CD4-positive, alpha-beta memory T cell (primary cell): ENCODE measurements at regions of chr14 and their contacts with region 1.

Region 1: GRCh38 chr14:105045710-105046326 is 19.4 kb downstream of the GPR132 start:
- DNase-seq: peak; percentile 86 to 91 (median 88)
- H3K4me3 ChIP-seq: no peak overlapping the region
- H3K4me3 Mint-ChIP-seq: peak overlapping the region in 4 of 8 donors; percentile 5 to 52 (median 27)
- H3K27ac ChIP-seq: no peak overlapping the region
- H3K27ac Mint-ChIP-seq: peak overlapping the region in 6 of 7 donors; percentile 77 to 86 (median 82)
- H3K4me1 ChIP-seq: peaks cover 9% of the 10 kb centered on the region
- H3K4me1 Mint-ChIP-seq: peaks cover 5 to 14% (median 9%) of the 10 kb centered on the region in 4 donors
- H3K27me3 ChIP-seq: no peaks in the 10 kb centered on the region
- H3K27me3 Mint-ChIP-seq: peaks cover 2 to 3% of the 10 kb centered on the region in 2 donors

Region 2: DNA sequence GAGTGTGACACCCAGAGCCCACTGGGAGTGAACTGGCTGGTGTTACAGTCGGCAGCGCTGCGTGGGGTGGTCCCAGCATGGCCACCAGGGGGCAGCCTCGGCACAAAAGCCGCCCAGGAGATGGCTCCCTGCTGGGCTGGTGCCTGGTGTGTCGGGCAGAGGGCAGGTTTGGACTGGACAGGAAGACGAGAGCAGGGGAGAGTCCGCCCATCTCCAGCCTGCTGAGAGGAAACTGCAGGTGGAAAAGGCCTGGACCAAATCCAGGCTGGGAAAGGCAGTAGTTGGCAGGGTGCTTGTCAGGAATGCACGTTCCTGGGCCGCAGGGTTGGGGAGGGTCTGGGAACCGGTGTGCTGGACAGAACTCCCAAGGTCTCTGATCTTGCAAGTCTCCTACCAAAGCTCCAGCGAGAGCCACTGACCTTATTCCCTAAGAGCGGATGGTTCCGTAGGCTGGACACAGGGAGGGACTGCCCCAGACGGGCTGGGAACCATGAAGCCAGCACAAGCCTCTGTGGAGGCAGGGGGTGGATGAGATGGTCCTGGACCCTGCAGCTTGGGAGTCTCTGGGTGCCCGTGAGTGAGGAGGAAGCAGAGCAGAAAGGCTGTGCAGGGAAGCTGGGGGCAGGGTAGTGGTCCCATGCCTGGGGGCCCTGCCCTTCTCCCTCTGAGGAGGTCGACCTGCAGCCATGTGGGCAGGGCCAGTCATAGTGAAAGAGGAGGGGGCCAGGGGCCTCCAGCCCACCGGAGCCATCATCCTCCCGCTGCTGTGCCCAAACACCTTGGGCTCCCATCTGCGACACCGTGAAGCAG is 69.4 kb before region 1 on chr14:
- CTCF ChIA-PET with region 1: interaction called, 162 read pairs
- POLR2A ChIA-PET with region 1: interaction called, 15 read pairs
- intact Hi-C with region 1: loop called (anchors 1 kb)
- DNase-seq: peak; percentile 80 to 87 (median 82)
- H3K4me3 ChIP-seq: no peak overlapping the region
- H3K4me3 Mint-ChIP-seq: peak overlapping the region; percentile 35 to 88 (median 64)
- H3K27ac ChIP-seq: no peak overlapping the region
- H3K27ac Mint-ChIP-seq: peak overlapping the region in 5 of 7 donors; percentile 19 to 66 (median 56)
- H3K4me1 ChIP-seq: peaks cover 17% of the 10 kb centered on the region
- H3K4me1 Mint-ChIP-seq: peaks cover 4 to 26% (median 13%) of the 10 kb centered on the region in 4 donors
- H3K27me3 ChIP-seq: peaks cover 13% of the 10 kb centered on the region
- H3K27me3 Mint-ChIP-seq: peaks cover 8 to 18% of the 10 kb centered on the region in 2 donors

Region 3: DNA sequence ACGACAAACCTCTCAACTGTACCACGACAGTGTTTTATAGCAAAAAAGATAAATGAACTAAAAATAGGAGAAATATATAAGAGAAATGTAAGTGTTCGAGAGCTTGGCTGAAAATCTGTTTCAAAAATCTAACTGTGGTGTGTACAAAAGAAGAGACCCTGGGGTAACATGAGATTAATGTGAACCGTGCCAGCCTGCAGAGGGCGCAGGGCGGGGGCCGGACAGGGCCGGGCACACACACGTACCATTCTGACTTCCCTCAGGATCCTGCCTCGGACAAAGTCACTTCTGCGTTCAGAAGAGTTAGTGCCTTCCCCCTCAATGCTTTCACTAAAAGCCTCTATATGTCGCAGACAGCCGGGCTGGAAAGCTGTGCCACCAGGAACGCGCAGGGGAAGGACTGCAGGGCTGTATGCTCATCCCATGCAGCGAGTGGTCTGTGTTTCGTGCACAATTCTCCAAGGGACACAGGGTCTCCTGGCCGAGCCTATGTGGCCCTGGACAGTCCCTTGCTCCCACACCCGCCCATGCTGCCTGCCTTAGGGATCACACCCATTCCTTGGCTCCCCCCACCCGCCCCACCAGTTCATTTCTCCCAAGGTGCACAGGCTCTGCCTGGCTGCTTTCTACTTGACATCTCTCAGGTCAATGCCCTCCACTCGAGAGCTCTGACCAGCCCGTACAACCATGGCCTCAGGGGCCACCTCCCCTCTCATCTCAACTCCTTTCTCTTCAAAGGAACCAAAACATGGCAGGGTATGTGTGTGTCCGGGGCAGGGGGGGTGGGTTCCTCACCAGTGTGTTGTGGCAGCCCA is 33.4 kb before region 1 on chr14:
- CTCF ChIA-PET with region 1: interaction called, 16 read pairs
- POLR2A ChIA-PET with region 1: no interaction called
- intact Hi-C with region 1: loop called (anchors 1 kb)
- DNase-seq: no peak
- H3K4me3 ChIP-seq: no peak overlapping the region
- H3K4me3 Mint-ChIP-seq: no peak overlapping the region
- H3K27ac ChIP-seq: no peak overlapping the region
- H3K27ac Mint-ChIP-seq: peak overlapping the region in 6 of 7 donors; percentile 23 to 70 (median 41)
- H3K4me1 ChIP-seq: peaks cover 51% of the 10 kb centered on the region
- H3K4me1 Mint-ChIP-seq: peaks cover 44 to 56% (median 50%) of the 10 kb centered on the region in 4 donors
- H3K27me3 ChIP-seq: no peaks in the 10 kb centered on the region
- H3K27me3 Mint-ChIP-seq: no peaks in the 10 kb centered on the region

Region 4: DNA sequence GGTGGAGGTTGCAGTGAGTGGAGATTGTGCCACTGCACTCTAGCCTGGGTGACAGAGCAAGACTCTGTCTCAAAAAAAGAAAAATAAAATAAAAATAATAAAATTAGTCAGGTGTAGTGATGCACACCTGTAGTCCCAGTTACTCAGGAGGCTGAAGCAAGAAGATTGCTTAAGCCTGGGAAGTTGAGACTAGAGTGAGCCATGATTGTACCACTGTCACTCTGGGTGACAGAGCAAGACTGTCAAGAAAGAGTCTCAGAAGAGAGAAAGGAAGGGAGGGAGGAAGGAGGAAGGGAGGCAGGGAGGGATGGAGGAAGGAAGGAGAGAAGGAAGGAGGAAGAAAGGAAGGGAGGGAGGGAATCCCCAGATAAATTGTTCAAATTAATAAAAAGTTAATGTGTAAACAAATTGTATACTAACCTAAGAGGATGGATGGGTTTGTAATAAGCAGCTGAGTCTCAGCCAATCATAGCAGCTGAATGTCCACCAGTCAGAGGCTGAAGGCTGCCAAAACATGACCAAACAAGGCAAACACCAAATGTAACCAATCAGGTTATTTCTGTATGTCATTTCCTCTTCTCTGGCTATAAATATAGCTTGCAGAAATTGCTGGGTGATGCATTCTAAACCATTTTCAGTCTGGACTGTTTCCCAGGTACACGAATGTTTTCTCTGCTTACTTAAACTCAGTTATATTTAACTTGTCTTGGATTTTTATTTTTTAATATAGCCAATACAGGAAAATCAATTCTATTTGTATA is 18.8 kb before region 1 on chr14:
- CTCF ChIA-PET with region 1: interaction called, 46 read pairs
- POLR2A ChIA-PET with region 1: interaction called, 4 read pairs
- intact Hi-C with region 1: no loop called
- DNase-seq: no peak
- H3K4me3 ChIP-seq: no peak overlapping the region
- H3K4me3 Mint-ChIP-seq: peak overlapping the region in 2 of 8 donors; percentile 15 to 36
- H3K27ac ChIP-seq: no peak overlapping the region
- H3K27ac Mint-ChIP-seq: peak overlapping the region in 4 of 7 donors; percentile 10 to 93 (median 76)
- H3K4me1 ChIP-seq: peaks cover 34% of the 10 kb centered on the region
- H3K4me1 Mint-ChIP-seq: peaks cover 10 to 49% (median 26%) of the 10 kb centered on the region in 4 donors
- H3K27me3 ChIP-seq: no peaks in the 10 kb centered on the region
- H3K27me3 Mint-ChIP-seq: no peaks in the 10 kb centered on the region

Region 5: GRCh38 chr14:105065280-105066228 is 19.7 kb after region 1 on chr14 and contains the start of gene GPR132:
- CTCF ChIA-PET with region 1: interaction called, 49 read pairs
- POLR2A ChIA-PET with region 1: interaction called, 27 read pairs
- intact Hi-C with region 1: no loop called
- DNase-seq: peak; percentile 93 to 99 (median 96)
- H3K4me3 ChIP-seq: peak within 1 kb of the TSS; percentile 89 to 97
- H3K4me3 Mint-ChIP-seq: peak within 1 kb of the TSS; percentile 89 to 97 (median 95)
- H3K27ac ChIP-seq: peak within 1 kb of the TSS; percentile 93
- H3K27ac Mint-ChIP-seq: peak within 1 kb of the TSS; percentile 92 to 100 (median 99)
- H3K4me1 ChIP-seq: peaks cover 91% of the 10 kb centered on the region
- H3K4me1 Mint-ChIP-seq: peaks cover 34 to 85% (median 62%) of the 10 kb centered on the region in 4 donors
- H3K27me3 ChIP-seq: no peaks in the 10 kb centered on the region
- H3K27me3 Mint-ChIP-seq: no peaks in the 10 kb centered on the region
- total RNA-seq, gene GPR132: 47.3 to 49.2 TPM

Region 6: GRCh38 chr14:105086833-105087307 is 41.1 kb after region 1 on chr14:
- CTCF ChIA-PET with region 1: interaction called, 27 read pairs
- POLR2A ChIA-PET with region 1: interaction called, 15 read pairs
- intact Hi-C with region 1: loop called (anchors 1 kb)
- DNase-seq: peak; percentile 81 to 87 (median 84)
- H3K4me3 ChIP-seq: peak overlapping the region; percentile 23 to 57
- H3K4me3 Mint-ChIP-seq: peak overlapping the region; percentile 71 to 83 (median 78)
- H3K27ac ChIP-seq: peak overlapping the region; percentile 26
- H3K27ac Mint-ChIP-seq: peak overlapping the region in 3 of 7 donors; percentile 15 to 91 (median 77)
- H3K4me1 ChIP-seq: peaks cover 23% of the 10 kb centered on the region
- H3K4me1 Mint-ChIP-seq: peaks cover 13 to 24% (median 16%) of the 10 kb centered on the region in 4 donors
- H3K27me3 ChIP-seq: no peaks in the 10 kb centered on the region
- H3K27me3 Mint-ChIP-seq: peaks cover 0 to 1% of the 10 kb centered on the region in 2 donors

Region 7: GRCh38 chr14:105212541-105213300 is 166.9 kb after region 1 on chr14:
- CTCF ChIA-PET with region 1: no interaction called
- POLR2A ChIA-PET with region 1: no interaction called
- intact Hi-C with region 1: no loop called
- DNase-seq: peak in 1 of 5 donors; percentile 29
- H3K4me3 ChIP-seq: no peak overlapping the region
- H3K4me3 Mint-ChIP-seq: no peak overlapping the region
- H3K27ac ChIP-seq: no peak overlapping the region
- H3K27ac Mint-ChIP-seq: peak overlapping the region in 1 of 7 donors; percentile 11
- H3K4me1 ChIP-seq: no peaks in the 10 kb centered on the region
- H3K4me1 Mint-ChIP-seq: peaks cover 0 to 9% (median 3%) of the 10 kb centered on the region in 4 donors
- H3K27me3 ChIP-seq: no peaks in the 10 kb centered on the region
- H3K27me3 Mint-ChIP-seq: no peaks in the 10 kb centered on the region

Region 8: GRCh38 chr14:105448706-105449111 is 402.9 kb after region 1 on chr14:
- CTCF ChIA-PET with region 1: no interaction called
- POLR2A ChIA-PET with region 1: no interaction called
- intact Hi-C with region 1: no loop called
- DNase-seq: peak; percentile 52 to 77 (median 64)
- H3K4me3 ChIP-seq: no peak overlapping the region
- H3K4me3 Mint-ChIP-seq: no peak overlapping the region
- H3K27ac ChIP-seq: no peak overlapping the region
- H3K27ac Mint-ChIP-seq: peak overlapping the region in 2 of 7 donors; percentile 15 to 42
- H3K4me1 ChIP-seq: no peaks in the 10 kb centered on the region
- H3K4me1 Mint-ChIP-seq: no peaks in the 10 kb centered on the region
- H3K27me3 ChIP-seq: no peaks in the 10 kb centered on the region
- H3K27me3 Mint-ChIP-seq: no peaks in the 10 kb centered on the region